CD4-positive, alpha-beta T cell (primary cell): ENCODE measurements at regions of chr4 and their contacts with region 1.

Region 1: GRCh38 chr4:17636696-17637622 is 22.5 kb downstream of the MED28 start:
- DNase-seq: peak; percentile 52 to 81 (median 62)
- ATAC-seq: peak; percentile 83
- H3K4me3 ChIP-seq: no peak overlapping the region
- H3K4me3 Mint-ChIP-seq: no peak overlapping the region
- H3K27ac ChIP-seq: no peak overlapping the region
- H3K27ac Mint-ChIP-seq: no peak overlapping the region
- H3K4me1 ChIP-seq: peaks cover 8% of the 10 kb centered on the region
- H3K4me1 Mint-ChIP-seq: no peaks in the 10 kb centered on the region
- H3K27me3 ChIP-seq: no peaks in the 10 kb centered on the region
- H3K27me3 Mint-ChIP-seq: no peaks in the 10 kb centered on the region
- CTCF ChIP-seq: peak; percentile 93

Region 2: GRCh38 chr4:17347445-17347844 is 289.5 kb before region 1 on chr4:
- CTCF ChIA-PET with region 1: no interaction called
- POLR2A ChIA-PET with region 1: no interaction called
- intact Hi-C with region 1: loop called in 1 of 2 experiments (anchors 10 kb)
- DNase-seq: peak in 9 of 14 experiments; percentile 2 to 60 (median 13)
- ATAC-seq: no peak
- H3K4me3 ChIP-seq: no peak overlapping the region
- H3K4me3 Mint-ChIP-seq: no peak overlapping the region
- H3K27ac ChIP-seq: no peak overlapping the region
- H3K27ac Mint-ChIP-seq: no peak overlapping the region
- H3K4me1 ChIP-seq: no peaks in the 10 kb centered on the region
- H3K4me1 Mint-ChIP-seq: no peaks in the 10 kb centered on the region
- H3K27me3 ChIP-seq: no peaks in the 10 kb centered on the region
- H3K27me3 Mint-ChIP-seq: no peaks in the 10 kb centered on the region
- CTCF ChIP-seq: peak; percentile 52

Region 3: GRCh38 chr4:17597517-17597916 is 39.4 kb before region 1 on chr4:
- CTCF ChIA-PET with region 1: no interaction called
- POLR2A ChIA-PET with region 1: no interaction called
- intact Hi-C with region 1: loop called in 1 of 2 experiments (anchors 5 kb)
- DNase-seq: peak in 1 of 14 experiments; percentile 12
- ATAC-seq: no peak
- H3K4me3 ChIP-seq: no peak overlapping the region
- H3K4me3 Mint-ChIP-seq: no peak overlapping the region
- H3K27ac ChIP-seq: no peak overlapping the region
- H3K27ac Mint-ChIP-seq: no peak overlapping the region
- H3K4me1 ChIP-seq: no peaks in the 10 kb centered on the region
- H3K4me1 Mint-ChIP-seq: no peaks in the 10 kb centered on the region
- H3K27me3 ChIP-seq: no peaks in the 10 kb centered on the region
- H3K27me3 Mint-ChIP-seq: no peaks in the 10 kb centered on the region
- CTCF ChIP-seq: no peak

Region 4: DNA sequence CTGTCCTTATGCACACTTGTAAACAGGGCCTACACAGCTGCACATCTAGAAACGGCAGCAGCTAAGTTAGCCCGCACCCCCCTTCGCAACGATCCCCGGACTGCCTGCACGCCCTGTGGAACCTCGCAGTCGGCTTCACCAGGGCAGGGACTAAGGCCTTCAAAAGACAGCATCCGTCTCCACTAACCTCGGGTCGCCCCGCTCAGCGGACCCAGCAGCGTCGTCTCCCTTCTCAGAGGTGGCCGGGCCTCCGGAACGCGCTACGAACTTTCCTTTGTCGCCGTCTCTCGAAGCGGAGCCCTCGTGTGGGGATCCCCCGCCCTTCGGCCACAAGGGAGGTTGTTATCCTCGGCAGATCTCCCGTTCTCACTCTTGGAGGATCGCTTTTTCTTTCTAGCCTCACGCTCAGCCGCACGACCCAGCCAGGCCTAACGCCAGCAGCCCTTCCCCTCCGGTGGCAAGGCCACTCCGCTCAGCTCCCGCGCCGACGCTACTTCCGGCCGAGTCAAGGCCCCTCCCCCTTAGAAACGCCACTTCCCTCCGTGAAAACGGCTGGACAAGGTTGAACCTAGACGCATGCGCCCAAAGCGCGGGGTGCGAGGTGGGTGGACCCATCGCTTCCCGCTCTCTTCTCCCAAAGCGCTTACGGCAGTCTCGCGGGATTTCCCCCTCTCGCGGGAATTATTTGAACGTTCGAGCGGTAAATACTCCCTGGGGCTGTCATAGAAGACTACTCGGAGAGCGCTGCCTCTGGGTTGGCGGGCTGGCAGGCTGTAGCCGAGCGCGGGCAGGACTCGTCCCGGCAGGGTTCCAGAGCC is 173.5 kb after region 1 on chr4 and contains the starts of genes DCAF16 and NCAPG:
- CTCF ChIA-PET with region 1: no interaction called
- POLR2A ChIA-PET with region 1: no interaction called
- intact Hi-C with region 1: loop called in 1 of 2 experiments (anchors 5 kb)
- DNase-seq: peak; percentile 97 to 100 (median 99)
- ATAC-seq: peak; percentile 86
- H3K4me3 ChIP-seq: peak within 1 kb of the TSS; percentile 92
- H3K4me3 Mint-ChIP-seq: peak within 1 kb of the TSS; percentile 97
- H3K27ac ChIP-seq: peak within 1 kb of the TSS; percentile 92 to 96
- H3K27ac Mint-ChIP-seq: peak within 1 kb of the TSS; percentile 96
- H3K4me1 ChIP-seq: peaks cover 20% of the 10 kb centered on the region
- H3K4me1 Mint-ChIP-seq: peaks cover 63% of the 10 kb centered on the region
- H3K27me3 ChIP-seq: no peaks in the 10 kb centered on the region
- H3K27me3 Mint-ChIP-seq: no peaks in the 10 kb centered on the region
- CTCF ChIP-seq: no peak
- total RNA-seq, gene DCAF16: 88.5 to 91.4 TPM
- total RNA-seq, gene NCAPG: 0.58 to 0.61 TPM